ENCODE measurements at regions of chr10 and their contacts with region 1.

Region 1: GRCh38 chr10:93916257-93917063 is 22.7 kb downstream of the SLC35G1 start:
- DNase-seq: peak in 1 of 2 experiments; percentile 34
- H3K4me3 ChIP-seq: no peak overlapping the region
- H3K4me3 Mint-ChIP-seq: peak overlapping the region; percentile 31
- H3K27ac Mint-ChIP-seq: no peak overlapping the region
- H3K4me1 ChIP-seq: peaks cover 40% of the 10 kb centered on the region
- H3K4me1 Mint-ChIP-seq: peaks cover 35% of the 10 kb centered on the region
- H3K27me3 ChIP-seq: no peaks in the 10 kb centered on the region
- H3K27me3 Mint-ChIP-seq: no peaks in the 10 kb centered on the region
- CTCF ChIP-seq: peak; percentile 49 to 76

Region 2: GRCh38 chr10:93993782-93994437 is 77.5 kb after region 1 on chr10 and contains the start of gene PLCE1:
- CTCF ChIA-PET with region 1: interaction called, 7 read pairs
- POLR2A ChIA-PET with region 1: interaction called, 3 read pairs
- intact Hi-C with region 1: loop called (anchors 2 kb)
- DNase-seq: peak; percentile 65 to 83
- H3K4me3 ChIP-seq: peak within 1 kb of the TSS; percentile 72
- H3K4me3 Mint-ChIP-seq: peak within 1 kb of the TSS; percentile 70
- H3K27ac Mint-ChIP-seq: peak within 1 kb of the TSS; percentile 6
- H3K4me1 ChIP-seq: peaks cover 49% of the 10 kb centered on the region
- H3K4me1 Mint-ChIP-seq: peaks cover 54% of the 10 kb centered on the region
- H3K27me3 ChIP-seq: no peaks in the 10 kb centered on the region
- H3K27me3 Mint-ChIP-seq: no peaks in the 10 kb centered on the region
- CTCF ChIP-seq: no peak
- total RNA-seq, gene PLCE1: 10.7 and 12.8 TPM in 2 replicates

Region 3: GRCh38 chr10:94016730-94017714 is 100.6 kb after region 1 on chr10:
- CTCF ChIA-PET with region 1: no interaction called
- POLR2A ChIA-PET with region 1: no interaction called
- intact Hi-C with region 1: no loop called
- DNase-seq: no peak
- H3K4me3 ChIP-seq: no peak overlapping the region
- H3K4me3 Mint-ChIP-seq: no peak overlapping the region
- H3K27ac Mint-ChIP-seq: no peak overlapping the region
- H3K4me1 ChIP-seq: peaks cover 19% of the 10 kb centered on the region
- H3K4me1 Mint-ChIP-seq: peaks cover 19% of the 10 kb centered on the region
- H3K27me3 ChIP-seq: no peaks in the 10 kb centered on the region
- H3K27me3 Mint-ChIP-seq: no peaks in the 10 kb centered on the region
- CTCF ChIP-seq: no peak

Region 4: GRCh38 chr10:94076321-94076841 is 159.9 kb after region 1 on chr10:
- CTCF ChIA-PET with region 1: interaction called, 17 read pairs
- POLR2A ChIA-PET with region 1: no interaction called
- intact Hi-C with region 1: loop called (anchors 2 kb)
- DNase-seq: peak; percentile 74
- H3K4me3 ChIP-seq: no peak overlapping the region
- H3K4me3 Mint-ChIP-seq: no peak overlapping the region
- H3K27ac Mint-ChIP-seq: peak overlapping the region; percentile 43
- H3K4me1 ChIP-seq: peaks cover 17% of the 10 kb centered on the region
- H3K4me1 Mint-ChIP-seq: peaks cover 15% of the 10 kb centered on the region
- H3K27me3 ChIP-seq: no peaks in the 10 kb centered on the region
- H3K27me3 Mint-ChIP-seq: no peaks in the 10 kb centered on the region
- CTCF ChIP-seq: peak; percentile 58 to 60

Region 5: GRCh38 chr10:94279835-94280709 is 363.6 kb after region 1 on chr10:
- CTCF ChIA-PET with region 1: no interaction called
- POLR2A ChIA-PET with region 1: no interaction called
- intact Hi-C with region 1: loop called (anchors 10 kb)
- DNase-seq: peak; percentile 56 to 79
- H3K4me3 ChIP-seq: no peak overlapping the region
- H3K4me3 Mint-ChIP-seq: no peak overlapping the region
- H3K27ac Mint-ChIP-seq: no peak overlapping the region
- H3K4me1 ChIP-seq: no peaks in the 10 kb centered on the region
- H3K4me1 Mint-ChIP-seq: peaks cover 9% of the 10 kb centered on the region
- H3K27me3 ChIP-seq: no peaks in the 10 kb centered on the region
- H3K27me3 Mint-ChIP-seq: no peaks in the 10 kb centered on the region
- CTCF ChIP-seq: peak; percentile 93 to 95

Region 6: GRCh38 chr10:94320285-94320914 is 403.9 kb after region 1 on chr10:
- CTCF ChIA-PET with region 1: interaction called, 33 read pairs
- POLR2A ChIA-PET with region 1: no interaction called
- intact Hi-C with region 1: loop called (anchors 1 kb)
- DNase-seq: peak; percentile 58 to 77
- H3K4me3 ChIP-seq: no peak overlapping the region
- H3K4me3 Mint-ChIP-seq: no peak overlapping the region
- H3K27ac Mint-ChIP-seq: no peak overlapping the region
- H3K4me1 ChIP-seq: peaks cover 15% of the 10 kb centered on the region
- H3K4me1 Mint-ChIP-seq: no peaks in the 10 kb centered on the region
- H3K27me3 ChIP-seq: no peaks in the 10 kb centered on the region
- H3K27me3 Mint-ChIP-seq: no peaks in the 10 kb centered on the region
- CTCF ChIP-seq: peak; percentile 82 to 85

Measured in Caco-2 (cell line).